PC-3 (cell line): ENCODE measurements at regions of chr7 and their contacts with region 1.

Region 1: DNA sequence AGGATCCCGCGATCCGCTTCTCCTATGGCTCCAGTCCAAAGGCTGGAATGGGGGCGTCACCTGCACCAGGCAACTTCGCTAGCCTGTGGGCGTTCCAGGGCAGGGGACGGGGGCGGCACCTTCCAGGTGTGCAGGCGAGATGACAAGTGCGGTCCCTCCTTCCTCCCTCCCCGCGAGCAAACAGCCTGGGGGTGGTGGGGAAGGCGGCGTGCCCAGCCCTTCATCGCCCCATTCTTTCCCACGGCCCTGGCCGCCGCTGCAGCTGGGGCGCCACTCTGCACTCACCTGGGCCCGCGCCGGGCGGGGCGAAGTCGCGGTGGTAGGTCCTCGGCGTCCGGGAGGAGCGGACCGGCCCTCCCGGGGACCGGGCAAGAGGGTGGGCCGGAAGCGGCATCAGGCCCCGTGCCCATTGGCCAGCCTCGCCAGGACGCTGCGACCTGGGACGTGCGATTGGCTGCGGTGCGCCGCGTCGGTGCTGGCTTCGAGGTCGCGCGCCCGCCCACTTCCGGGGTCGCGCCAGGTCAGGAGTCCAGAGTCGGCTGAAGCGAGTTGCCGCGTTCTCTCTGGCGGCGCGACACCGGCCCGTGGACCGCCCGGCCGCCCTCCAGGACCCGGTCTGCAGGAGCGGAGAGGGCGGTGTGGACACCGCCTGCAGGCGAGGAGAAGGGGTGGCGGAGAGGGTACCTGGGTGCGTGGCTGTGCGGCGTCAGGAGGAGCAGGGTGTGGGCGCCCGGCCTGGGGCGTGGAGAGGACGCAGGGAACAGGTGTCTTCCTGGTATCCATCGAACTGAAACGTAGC is at the start of gene TECPR1:
- DNase-seq: peak; percentile 92
- ATAC-seq: peak; percentile 98
- H3K4me3 ChIP-seq: peak within 1 kb of the TSS; percentile 99
- H3K27ac ChIP-seq: peak within 1 kb of the TSS; percentile 65
- H3K4me1 ChIP-seq: peaks cover 28% of the 10 kb centered on the region
- H3K27me3 ChIP-seq: no peaks in the 10 kb centered on the region
- CTCF ChIP-seq: no peak
- total RNA-seq, gene TECPR1: 9.4 and 11.5 TPM in 2 replicates

Region 2: DNA sequence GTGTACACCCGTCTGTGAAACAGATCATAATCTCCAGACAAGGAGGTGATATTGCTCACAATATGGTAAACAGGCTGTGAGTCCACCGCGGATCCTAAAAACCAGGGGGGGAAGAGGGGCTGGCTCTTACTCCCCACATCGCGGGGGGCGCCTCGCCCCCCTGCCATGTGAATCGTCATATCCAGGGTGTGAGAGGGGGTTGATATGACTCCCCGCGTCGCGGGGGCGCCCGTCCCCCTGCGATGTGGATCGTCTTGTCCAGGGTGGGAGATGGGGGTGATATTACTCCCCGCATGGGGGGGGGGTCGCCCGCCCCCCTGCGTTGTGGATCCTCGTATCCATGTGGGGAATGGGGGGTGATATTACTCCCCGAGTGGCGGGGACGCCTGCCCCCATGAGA is 293.0 kb before region 1 on chr7:
- CTCF ChIA-PET with region 1: no interaction called
- POLR2A ChIA-PET with region 1: no interaction called
- intact Hi-C with region 1: no loop called
- DNase-seq: no peak
- ATAC-seq: no peak
- H3K4me3 ChIP-seq: no peak overlapping the region
- H3K27ac ChIP-seq: no peak overlapping the region
- H3K4me1 ChIP-seq: no peaks in the 10 kb centered on the region
- H3K27me3 ChIP-seq: no peaks in the 10 kb centered on the region
- CTCF ChIP-seq: no peak

Region 3: GRCh38 chr7:98266840-98267239 is 14.8 kb after region 1 on chr7:
- CTCF ChIA-PET with region 1: no interaction called
- POLR2A ChIA-PET with region 1: interaction called, 16 read pairs
- intact Hi-C with region 1: no loop called
- DNase-seq: no peak
- ATAC-seq: peak; percentile 66
- H3K4me3 ChIP-seq: no peak overlapping the region
- H3K27ac ChIP-seq: no peak overlapping the region
- H3K4me1 ChIP-seq: no peaks in the 10 kb centered on the region
- H3K27me3 ChIP-seq: no peaks in the 10 kb centered on the region
- CTCF ChIP-seq: peak; percentile 44